Left colon (tissue), 2 donors: ENCODE measurements at regions of chr2 and their contacts with region 1.

Region 1: GRCh38 chr2:20135631-20136050 is 84.2 kb upstream of the LAPTM4A start:
- DNase-seq: peak; percentile 56 to 73
- ATAC-seq: peak; percentile 59

Region 2: DNA sequence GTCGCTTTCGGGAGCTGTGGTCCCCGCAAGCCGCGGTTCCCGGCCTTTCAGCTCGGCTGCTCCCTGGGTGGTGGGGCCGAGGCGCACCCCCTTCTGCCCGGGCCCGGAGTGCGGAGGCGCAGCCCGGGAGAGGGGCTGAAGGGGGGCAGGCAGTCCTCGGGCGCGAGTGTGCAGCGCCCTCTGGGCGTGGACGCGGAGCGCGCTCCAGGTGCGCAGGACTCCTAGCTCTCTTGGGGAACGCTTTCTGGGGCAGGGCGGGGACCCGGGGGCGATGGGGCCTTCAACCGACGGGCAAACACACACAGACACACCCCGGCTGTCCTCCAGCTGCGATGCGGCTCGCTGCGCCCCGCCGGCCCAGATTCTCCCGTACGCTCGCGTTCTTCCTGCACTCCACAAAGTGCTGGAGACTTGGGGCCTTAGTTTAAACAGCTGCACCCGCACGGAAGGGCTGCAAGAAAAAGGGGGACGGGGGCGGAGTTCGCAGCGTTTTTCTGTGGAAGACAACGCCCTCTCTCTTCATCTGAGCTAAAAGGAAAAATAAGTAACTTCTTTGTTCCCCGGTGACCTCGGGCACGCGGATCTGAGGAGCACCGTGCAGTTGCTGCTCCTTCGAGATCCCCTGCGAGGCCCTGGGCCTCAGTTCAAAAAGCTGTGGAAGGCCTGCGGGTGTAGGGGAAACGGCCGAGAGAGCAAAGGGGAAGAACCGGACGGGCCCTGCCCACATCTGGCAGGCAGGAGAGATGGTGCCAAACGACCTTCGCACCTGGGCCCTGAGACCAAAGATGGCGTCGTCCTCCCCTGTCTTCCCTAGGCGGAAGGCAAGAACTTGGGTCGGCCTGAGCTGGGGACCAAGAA is 89.9 kb after region 1 on chr2:
- intact Hi-C with region 1: loop called in 1 of 2 experiments (anchors 10 kb)
- DNase-seq: peak; percentile 89 to 91
- ATAC-seq: peak; percentile 81